OCI-LY7 (cell line): ENCODE measurements at regions of chr5 and their contacts with region 1.

Region 1: GRCh38 chr5:172188033-172188892 is at the start of gene STK10:
- DNase-seq: peak; percentile 90
- H3K4me3 ChIP-seq: peak within 1 kb of the TSS; percentile 97
- H3K27ac ChIP-seq: peak within 1 kb of the TSS; percentile 62
- H3K4me1 ChIP-seq: peaks cover 26% of the 10 kb centered on the region
- CTCF ChIP-seq: peak; percentile 95
- total RNA-seq, gene STK10: 53.1 and 53.7 TPM in 2 replicates

Region 2: DNA sequence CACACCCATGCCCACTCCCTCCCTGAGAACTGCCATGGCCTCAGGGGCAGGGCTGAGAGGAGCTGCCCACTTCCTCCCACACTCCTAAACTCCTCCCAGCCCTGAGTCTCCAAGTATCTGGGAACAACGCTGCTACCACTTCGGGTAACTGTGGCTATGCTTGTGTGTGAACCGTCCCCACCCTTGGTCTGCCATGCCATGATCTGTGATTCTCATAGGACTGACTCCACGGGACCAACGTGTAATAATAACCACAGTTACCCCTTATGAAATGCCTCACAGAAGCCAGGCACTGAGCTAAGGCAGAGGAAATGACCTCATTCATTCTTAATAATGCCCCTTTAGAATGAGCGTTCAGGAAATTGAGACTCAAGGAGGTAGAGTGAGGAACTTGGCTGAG is 506.6 kb before region 1 on chr5:
- CTCF ChIA-PET with region 1: no interaction called
- POLR2A ChIA-PET with region 1: no interaction called
- intact Hi-C with region 1: no loop called
- DNase-seq: no peak
- H3K4me3 ChIP-seq: no peak overlapping the region
- H3K27ac ChIP-seq: no peak overlapping the region
- H3K4me1 ChIP-seq: no peaks in the 10 kb centered on the region
- CTCF ChIP-seq: no peak

Region 3: GRCh38 chr5:171913987-171914273 is 274.3 kb before region 1 on chr5:
- CTCF ChIA-PET with region 1: no interaction called
- POLR2A ChIA-PET with region 1: interaction called, 3 read pairs
- intact Hi-C with region 1: loop called (anchors 5 kb)
- DNase-seq: no peak
- H3K4me3 ChIP-seq: no peak overlapping the region
- H3K27ac ChIP-seq: no peak overlapping the region
- H3K4me1 ChIP-seq: peaks cover 5% of the 10 kb centered on the region
- CTCF ChIP-seq: no peak

Region 4: DNA sequence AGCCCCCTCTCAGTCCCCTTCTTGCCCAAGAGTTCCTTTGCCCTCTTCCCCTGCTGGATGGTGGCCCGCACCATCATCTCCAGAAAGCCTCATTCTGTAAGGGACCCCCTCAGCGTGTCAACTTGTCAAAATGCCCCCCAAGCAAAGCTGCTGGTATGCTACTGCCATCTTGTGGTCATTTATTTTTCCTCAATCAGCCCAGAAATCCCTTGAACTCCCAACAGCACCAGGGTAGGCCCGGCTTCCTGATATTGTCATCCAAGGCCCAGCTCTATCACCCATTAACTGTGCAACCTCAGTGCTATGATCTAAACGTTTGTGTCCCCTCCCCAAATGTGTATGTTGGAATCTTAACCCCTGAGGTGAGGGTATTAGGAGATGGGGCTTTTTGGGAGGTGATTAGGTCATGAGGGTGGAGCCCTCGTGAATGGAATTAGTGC is 128.6 kb before region 1 on chr5:
- CTCF ChIA-PET with region 1: interaction called, 4 read pairs
- POLR2A ChIA-PET with region 1: no interaction called
- intact Hi-C with region 1: loop called (anchors 2 kb)
- DNase-seq: peak; percentile 37
- H3K4me3 ChIP-seq: no peak overlapping the region
- H3K27ac ChIP-seq: no peak overlapping the region
- H3K4me1 ChIP-seq: no peaks in the 10 kb centered on the region
- CTCF ChIP-seq: peak; percentile 82

Region 5: DNA sequence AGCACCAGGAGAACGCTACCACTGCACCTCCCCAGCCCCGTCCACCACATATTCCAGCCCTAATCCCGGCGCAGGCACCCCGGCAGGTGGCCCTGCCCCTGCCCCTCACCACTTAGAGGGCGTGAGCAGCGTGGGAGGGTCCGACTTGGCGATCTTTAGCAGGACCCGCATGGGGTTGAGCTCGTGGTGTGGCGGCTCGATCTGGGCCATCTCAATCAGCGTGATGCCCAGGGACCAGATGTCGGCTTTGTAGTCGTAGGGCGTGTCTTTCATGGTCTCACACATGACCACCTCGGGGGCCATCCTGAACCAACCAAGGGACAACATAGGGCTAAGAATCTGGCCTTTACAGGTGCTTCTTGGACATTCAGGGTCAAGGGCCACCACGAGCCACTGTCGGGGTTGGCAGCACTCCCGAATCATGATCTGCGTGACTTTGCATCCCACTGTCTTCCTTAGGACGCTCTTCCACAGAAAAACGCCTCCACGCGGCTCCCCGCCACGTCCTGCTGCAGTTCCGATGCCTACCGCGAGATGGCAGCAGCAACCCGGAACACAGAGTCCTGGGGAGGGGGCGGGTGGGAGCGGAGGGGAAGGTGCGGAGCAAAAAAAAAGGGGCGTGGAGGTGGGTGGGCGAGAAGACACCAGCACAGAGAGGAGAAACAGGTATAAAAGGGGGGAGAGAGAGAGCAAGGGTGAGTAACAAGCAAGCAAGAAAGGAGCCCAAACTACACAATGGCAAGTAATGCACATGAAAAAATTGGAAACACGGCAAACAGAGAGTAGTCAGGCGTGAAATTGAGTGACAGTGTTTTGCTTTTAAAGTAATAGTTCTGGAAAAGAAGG is 81.5 kb before region 1 on chr5:
- CTCF ChIA-PET with region 1: interaction called, 13 read pairs
- POLR2A ChIA-PET with region 1: interaction called, 7 read pairs
- intact Hi-C with region 1: loop called (anchors 1 kb)
- DNase-seq: peak; percentile 57
- H3K4me3 ChIP-seq: peak overlapping the region; percentile 35
- H3K27ac ChIP-seq: no peak overlapping the region
- H3K4me1 ChIP-seq: peaks cover 31% of the 10 kb centered on the region
- CTCF ChIP-seq: peak; percentile 96

Region 6: GRCh38 chr5:172140120-172140519 is 48.1 kb before region 1 on chr5:
- CTCF ChIA-PET with region 1: interaction called, 4 read pairs
- POLR2A ChIA-PET with region 1: no interaction called
- intact Hi-C with region 1: loop called (anchors 1 kb)
- DNase-seq: peak; percentile 90
- H3K4me3 ChIP-seq: peak overlapping the region; percentile 16
- H3K27ac ChIP-seq: peak overlapping the region; percentile 85
- H3K4me1 ChIP-seq: peaks cover 50% of the 10 kb centered on the region
- CTCF ChIP-seq: no peak

Region 7: GRCh38 chr5:172283020-172283861 is 95.0 kb after region 1 on chr5 and contains the start of gene UBTD2:
- CTCF ChIA-PET with region 1: interaction called, 3 read pairs
- POLR2A ChIA-PET with region 1: interaction called, 4 read pairs
- intact Hi-C with region 1: loop called (anchors 2 kb)
- DNase-seq: peak; percentile 82
- H3K4me3 ChIP-seq: peak within 1 kb of the TSS; percentile 94
- H3K27ac ChIP-seq: peak within 1 kb of the TSS; percentile 44
- H3K4me1 ChIP-seq: peaks cover 25% of the 10 kb centered on the region
- CTCF ChIP-seq: peak; percentile 67; the same call in 1 of the 2 replicates
- total RNA-seq, gene UBTD2: 14.7 and 16.0 TPM in 2 replicates